SK-N-SH (cell line): ENCODE measurements at regions of chr2 and their contacts with region 1.

Region 1: DNA sequence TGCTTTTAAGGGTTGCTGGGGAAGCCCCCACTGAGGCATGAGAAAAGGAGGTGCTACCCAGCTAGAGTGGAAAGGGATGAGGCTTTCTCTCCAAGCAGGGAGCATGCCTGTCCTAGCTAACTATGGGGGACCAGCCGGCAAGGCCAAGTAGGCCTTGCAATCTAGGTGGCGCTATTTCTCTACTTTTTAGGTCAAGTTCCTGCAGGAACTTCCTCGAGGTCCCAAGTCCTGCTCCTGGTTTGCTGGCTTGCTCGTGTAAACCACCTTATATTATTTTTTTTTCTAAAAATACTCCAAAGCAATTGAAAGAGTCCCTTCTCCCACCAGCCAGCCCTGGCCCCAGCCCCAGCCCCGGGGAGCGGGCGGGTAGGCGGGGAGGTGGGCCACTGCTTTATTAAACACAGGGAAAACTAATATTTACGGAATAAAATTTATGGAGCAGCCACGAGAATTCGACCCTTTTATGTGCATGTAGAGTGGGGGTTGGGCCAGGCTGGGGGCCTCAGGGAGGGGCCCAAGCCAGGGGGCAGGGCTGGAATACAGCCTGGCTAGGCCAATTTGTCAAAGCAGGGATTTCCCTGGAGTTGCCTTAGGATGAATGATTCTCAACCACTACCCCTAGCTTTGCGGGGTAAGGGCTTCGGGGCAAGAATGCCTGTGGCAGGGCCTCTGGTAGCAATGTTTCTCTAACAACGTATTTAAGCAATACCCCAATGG is 12.8 kb upstream of the IHH start:
- DNase-seq: peak; percentile 68
- H3K4me3 ChIP-seq: no peak overlapping the region
- H3K27ac ChIP-seq: no peak overlapping the region
- H3K4me1 ChIP-seq: no peaks in the 10 kb centered on the region
- H3K27me3 ChIP-seq: no peaks in the 10 kb centered on the region
- CTCF ChIP-seq: peak; percentile 63
- EP300 ChIP-seq: no peak
- RAD21 ChIP-seq: peak; percentile 59

Region 2: GRCh38 chr2:219087361-219087760 is 13.8 kb after region 1 on chr2:
- CTCF ChIA-PET with region 1: interaction called, 17 read pairs
- POLR2A ChIA-PET with region 1: interaction called, 4 read pairs
- DNase-seq: no peak
- H3K4me3 ChIP-seq: no peak overlapping the region
- H3K27ac ChIP-seq: no peak overlapping the region
- H3K4me1 ChIP-seq: no peaks in the 10 kb centered on the region
- H3K27me3 ChIP-seq: no peaks in the 10 kb centered on the region
- CTCF ChIP-seq: no peak
- EP300 ChIP-seq: no peak
- RAD21 ChIP-seq: no peak

Region 3: DNA sequence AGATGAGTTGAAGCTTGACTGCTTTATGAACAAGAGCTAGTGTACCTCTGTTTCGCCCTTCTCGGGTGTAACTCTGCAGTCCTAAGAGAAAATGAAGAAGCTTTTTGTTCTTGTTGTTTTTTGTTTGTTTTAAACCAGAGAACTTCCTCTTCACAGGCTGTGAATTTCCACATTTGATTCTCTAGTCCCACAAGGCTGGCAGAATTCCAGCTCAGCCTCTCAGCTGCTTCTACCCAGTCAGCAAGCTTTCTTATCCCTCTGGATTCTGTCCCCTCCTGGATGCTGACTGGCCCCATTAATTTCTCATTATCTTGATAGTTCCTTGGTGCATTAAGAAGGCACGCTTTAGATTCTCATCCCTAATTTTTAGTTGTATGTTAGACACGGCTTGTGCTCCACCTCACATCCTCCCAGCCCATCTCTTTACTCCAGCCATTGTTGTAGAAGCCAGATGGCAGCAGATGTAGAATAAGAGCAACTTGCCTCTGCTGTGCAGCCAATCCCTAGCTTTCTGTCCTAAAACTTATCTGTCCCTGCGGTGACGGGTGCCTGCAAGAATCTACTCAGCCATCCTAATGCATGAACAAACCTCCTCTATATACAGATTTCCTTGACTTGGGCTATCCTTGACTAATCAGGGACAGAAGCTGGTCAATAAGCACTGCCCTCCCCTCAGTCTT is 271.3 kb after region 1 on chr2:
- CTCF ChIA-PET with region 1: no interaction called
- POLR2A ChIA-PET with region 1: no interaction called
- DNase-seq: no peak
- H3K4me3 ChIP-seq: no peak overlapping the region
- H3K27ac ChIP-seq: no peak overlapping the region
- H3K4me1 ChIP-seq: peaks cover 0 to 4% of the 10 kb centered on the region in 2 experiments; a peak in 1 of 4 replicates
- H3K27me3 ChIP-seq: no peaks in the 10 kb centered on the region
- CTCF ChIP-seq: no peak
- EP300 ChIP-seq: no peak
- RAD21 ChIP-seq: no peak